CD4-positive, alpha-beta T cell (primary cell): ENCODE measurements at regions of chr12 and their contacts with region 1.

Region 1: DNA sequence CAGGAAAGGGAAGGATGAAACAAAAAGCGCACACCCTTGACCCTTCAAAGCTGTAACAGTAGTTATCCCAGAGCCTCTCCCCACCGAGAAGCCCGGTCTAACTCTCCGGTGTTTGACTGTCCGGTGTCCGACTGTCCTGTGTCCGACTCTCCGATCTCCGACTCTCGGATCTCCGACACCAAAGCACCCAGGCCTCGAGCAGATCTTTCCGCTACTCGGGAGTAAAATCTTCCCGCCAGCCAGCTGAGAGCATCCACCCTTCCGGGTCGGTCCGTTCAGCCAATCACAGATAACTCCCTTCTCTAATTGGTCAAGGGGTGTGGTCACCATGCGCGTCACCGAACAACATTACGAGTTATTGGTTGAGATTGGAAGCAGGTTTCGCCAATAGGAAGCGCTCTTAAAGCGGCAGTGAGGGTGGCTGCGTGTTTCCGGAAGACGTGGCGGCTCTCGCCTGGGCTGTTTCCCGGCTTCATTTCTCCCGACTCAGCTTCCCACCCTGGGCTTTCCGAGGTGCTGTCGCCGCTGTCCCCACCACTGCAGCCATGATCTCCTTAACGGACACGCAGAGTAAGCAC is at the starts of genes GOLT1B and RECQL:
- DNase-seq: peak; percentile 75 to 97 (median 82)
- ATAC-seq: peak; percentile 93
- H3K4me3 ChIP-seq: peak within 1 kb of the TSS; percentile 88
- H3K4me3 Mint-ChIP-seq: no peak within 1 kb of the TSS
- H3K27ac ChIP-seq: peak within 1 kb of the TSS; percentile 58 to 79
- H3K27ac Mint-ChIP-seq: no peak within 1 kb of the TSS
- H3K4me1 ChIP-seq: peaks cover 25% of the 10 kb centered on the region
- H3K4me1 Mint-ChIP-seq: peaks cover 52% of the 10 kb centered on the region
- H3K27me3 ChIP-seq: no peaks in the 10 kb centered on the region
- H3K27me3 Mint-ChIP-seq: no peaks in the 10 kb centered on the region
- CTCF ChIP-seq: no peak
- total RNA-seq, gene GOLT1B: 41.5 to 46.3 TPM
- total RNA-seq, gene RECQL: 11.1 to 16.0 TPM

Region 2: DNA sequence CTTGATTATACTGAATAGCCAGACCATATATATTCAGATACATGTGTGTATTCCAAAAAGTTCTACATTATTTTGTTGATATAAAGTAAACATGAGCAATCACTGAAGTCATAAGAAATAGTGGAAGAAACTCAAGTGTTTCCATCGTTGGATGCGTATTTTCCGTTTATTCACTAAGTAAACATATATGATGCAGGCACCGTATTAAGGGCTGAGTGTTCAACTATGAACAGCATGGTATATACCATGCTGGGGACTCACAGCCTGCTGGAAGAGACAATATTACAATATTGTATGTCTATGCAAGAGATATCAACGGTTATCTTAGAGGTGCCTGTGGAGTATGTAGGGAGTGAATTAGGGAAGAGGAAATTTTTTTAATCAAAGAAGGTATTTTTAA is 62.8 kb before region 1 on chr12:
- CTCF ChIA-PET with region 1: no interaction called
- POLR2A ChIA-PET with region 1: interaction called, 19 read pairs
- intact Hi-C with region 1: loop called (anchors 2 kb)
- DNase-seq: peak in 1 of 14 experiments; percentile 16
- ATAC-seq: no peak
- H3K4me3 ChIP-seq: peak overlapping the region; percentile 89
- H3K4me3 Mint-ChIP-seq: peak overlapping the region; percentile 99
- H3K27ac ChIP-seq: peak overlapping the region in 1 of 2 donors; percentile 12
- H3K27ac Mint-ChIP-seq: peak overlapping the region; percentile 97
- H3K4me1 ChIP-seq: peaks cover 19% of the 10 kb centered on the region
- H3K4me1 Mint-ChIP-seq: peaks cover 55% of the 10 kb centered on the region
- H3K27me3 ChIP-seq: no peaks in the 10 kb centered on the region
- H3K27me3 Mint-ChIP-seq: no peaks in the 10 kb centered on the region
- CTCF ChIP-seq: no peak

Region 3: GRCh38 chr12:21657326-21658077 is 156.0 kb after region 1 on chr12 and contains the start of gene LDHB:
- CTCF ChIA-PET with region 1: no interaction called
- POLR2A ChIA-PET with region 1: interaction called, 20 read pairs
- intact Hi-C with region 1: loop called (anchors 2 to 5 kb)
- DNase-seq: peak; percentile 83 to 96 (median 91)
- ATAC-seq: peak; percentile 92
- H3K4me3 ChIP-seq: peak within 1 kb of the TSS; percentile 87
- H3K4me3 Mint-ChIP-seq: peak within 1 kb of the TSS; percentile 99
- H3K27ac ChIP-seq: peak within 1 kb of the TSS; percentile 56 to 80
- H3K27ac Mint-ChIP-seq: peak within 1 kb of the TSS; percentile 91
- H3K4me1 ChIP-seq: peaks cover 16% of the 10 kb centered on the region
- H3K4me1 Mint-ChIP-seq: peaks cover 77% of the 10 kb centered on the region
- H3K27me3 ChIP-seq: no peaks in the 10 kb centered on the region
- H3K27me3 Mint-ChIP-seq: no peaks in the 10 kb centered on the region
- CTCF ChIP-seq: no peak
- total RNA-seq, gene LDHB: 559 to 605 TPM

Region 4: GRCh38 chr12:22046090-22046967 is 544.9 kb after region 1 on chr12 and contains the start of gene CMAS:
- CTCF ChIA-PET with region 1: no interaction called
- POLR2A ChIA-PET with region 1: interaction called, 5 read pairs
- intact Hi-C with region 1: loop called (anchors 2 to 5 kb)
- DNase-seq: peak; percentile 62 to 89 (median 77)
- ATAC-seq: peak; percentile 89
- H3K4me3 ChIP-seq: peak within 1 kb of the TSS; percentile 85
- H3K4me3 Mint-ChIP-seq: peak within 1 kb of the TSS; percentile 97
- H3K27ac ChIP-seq: peak within 1 kb of the TSS; percentile 29 to 43
- H3K27ac Mint-ChIP-seq: peak within 1 kb of the TSS; percentile 89
- H3K4me1 ChIP-seq: peaks cover 7% of the 10 kb centered on the region
- H3K4me1 Mint-ChIP-seq: peaks cover 54% of the 10 kb centered on the region
- H3K27me3 ChIP-seq: no peaks in the 10 kb centered on the region
- H3K27me3 Mint-ChIP-seq: no peaks in the 10 kb centered on the region
- CTCF ChIP-seq: no peak
- total RNA-seq, gene CMAS: 5.5 to 7.0 TPM

Region 5: GRCh38 chr12:22631863-22632463 is 1130.5 kb after region 1 on chr12:
- CTCF ChIA-PET with region 1: no interaction called
- POLR2A ChIA-PET with region 1: no interaction called
- intact Hi-C with region 1: loop called in 1 of 2 experiments (anchors 10 kb)
- DNase-seq: peak in 3 of 14 experiments; percentile 43 to 54 (median 49)
- ATAC-seq: peak; percentile 61
- H3K4me3 ChIP-seq: no peak overlapping the region
- H3K4me3 Mint-ChIP-seq: no peak overlapping the region
- H3K27ac ChIP-seq: no peak overlapping the region
- H3K27ac Mint-ChIP-seq: no peak overlapping the region
- H3K4me1 ChIP-seq: peaks cover 11% of the 10 kb centered on the region
- H3K4me1 Mint-ChIP-seq: peaks cover 81% of the 10 kb centered on the region
- H3K27me3 ChIP-seq: no peaks in the 10 kb centered on the region
- H3K27me3 Mint-ChIP-seq: no peaks in the 10 kb centered on the region
- CTCF ChIP-seq: peak; percentile 82